ENCODE measurements at regions of chr1 and their contacts with region 1.

Region 1: DNA sequence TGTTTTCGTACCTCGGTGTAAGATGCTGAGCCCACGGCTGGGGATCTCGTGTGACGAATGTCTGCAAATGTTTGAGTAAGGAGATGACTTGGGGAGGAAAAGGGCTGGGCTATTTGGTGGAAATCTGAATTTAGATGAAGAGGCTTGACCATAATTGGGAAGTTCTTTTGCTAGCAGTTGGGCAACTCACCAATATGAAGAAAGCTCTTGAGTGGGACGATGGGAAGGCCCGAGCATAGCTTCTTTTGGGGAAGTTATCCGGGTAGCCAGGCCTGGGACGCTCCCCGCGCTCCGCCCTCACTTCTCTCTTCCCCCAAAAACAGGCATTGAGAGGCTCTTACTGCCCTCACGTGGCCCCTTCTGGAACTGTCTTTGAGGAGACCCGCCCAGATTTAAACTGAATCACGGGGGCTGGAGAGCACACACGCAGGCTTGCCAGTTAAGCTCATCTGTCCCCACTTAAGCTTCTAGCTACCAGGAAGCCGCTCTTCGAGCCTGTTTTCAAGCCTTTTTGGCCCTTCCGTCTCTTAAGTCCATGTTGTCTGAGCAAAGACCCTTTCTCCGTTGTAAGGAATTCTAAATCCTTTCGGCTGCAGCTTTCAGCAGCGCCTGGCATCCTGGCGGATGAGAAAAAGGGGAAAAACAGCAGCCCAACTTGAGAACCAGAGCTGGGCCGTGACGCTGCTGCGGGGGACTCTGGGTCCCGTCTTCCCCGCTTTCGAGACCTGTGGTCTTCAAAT is 93.1 kb downstream of the NID1 start:
- DNase-seq: peak; percentile 93
- ATAC-seq: peak; percentile 98
- H3K4me3 Mint-ChIP-seq: peak overlapping the region; percentile 60
- H3K27ac Mint-ChIP-seq: peak overlapping the region; percentile 82
- H3K4me1 Mint-ChIP-seq: peaks cover 15% of the 10 kb centered on the region
- H3K27me3 Mint-ChIP-seq: peaks cover 2% of the 10 kb centered on the region

Region 2: GRCh38 chr1:235642011-235642942 is 329.5 kb before region 1 on chr1:
- CTCF ChIA-PET with region 1: no interaction called
- POLR2A ChIA-PET with region 1: no interaction called
- intact Hi-C with region 1: loop called in 1 of 2 experiments (anchors 5 kb)
- DNase-seq: peak; percentile 84
- ATAC-seq: peak; percentile 89
- H3K4me3 Mint-ChIP-seq: peak overlapping the region; percentile 47
- H3K27ac Mint-ChIP-seq: peak overlapping the region; percentile 77
- H3K4me1 Mint-ChIP-seq: peaks cover 23% of the 10 kb centered on the region
- H3K27me3 Mint-ChIP-seq: peaks cover 25% of the 10 kb centered on the region

Region 3: GRCh38 chr1:235791532-235792060 is 180.1 kb before region 1 on chr1:
- CTCF ChIA-PET with region 1: interaction called, 8 read pairs
- POLR2A ChIA-PET with region 1: no interaction called
- intact Hi-C with region 1: loop called in 1 of 2 experiments (anchors 10 kb)
- DNase-seq: no peak
- ATAC-seq: no peak
- H3K4me3 Mint-ChIP-seq: no peak overlapping the region
- H3K27ac Mint-ChIP-seq: no peak overlapping the region
- H3K4me1 Mint-ChIP-seq: peaks cover 6% of the 10 kb centered on the region
- H3K27me3 Mint-ChIP-seq: no peaks in the 10 kb centered on the region

Region 4: DNA sequence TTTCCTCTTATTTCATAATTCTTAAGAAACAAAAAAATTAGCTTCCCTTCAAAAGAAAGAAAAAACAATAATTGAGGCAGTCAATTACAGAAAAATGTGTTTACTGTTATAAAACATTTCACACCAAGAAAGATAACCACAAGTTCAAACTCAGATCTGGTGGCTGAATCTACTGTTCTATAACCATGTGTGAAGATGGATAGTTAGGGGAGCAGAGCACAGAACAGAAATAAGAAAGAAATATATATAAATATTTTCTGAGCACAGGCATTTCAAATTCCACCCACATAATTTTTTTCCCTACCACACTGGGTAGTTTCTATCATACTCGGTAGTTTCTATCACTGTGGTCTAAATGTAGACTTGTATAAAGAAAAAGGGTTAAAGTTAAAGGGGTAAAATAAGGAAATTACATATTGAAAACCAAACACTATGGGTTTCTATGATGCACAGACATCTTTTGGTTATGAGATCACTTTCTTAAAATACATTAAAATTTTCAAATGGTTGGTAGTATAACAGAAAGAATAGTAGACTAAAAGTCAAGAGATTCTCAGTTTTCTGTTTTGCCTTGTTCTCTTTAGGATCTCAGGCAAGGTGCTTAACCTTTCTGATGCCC is 115.8 kb before region 1 on chr1:
- CTCF ChIA-PET with region 1: interaction called, 12 read pairs
- POLR2A ChIA-PET with region 1: interaction called, 7 read pairs
- intact Hi-C with region 1: no loop called
- DNase-seq: no peak
- ATAC-seq: peak; percentile 62
- H3K4me3 Mint-ChIP-seq: no peak overlapping the region
- H3K27ac Mint-ChIP-seq: peak overlapping the region; percentile 84
- H3K4me1 Mint-ChIP-seq: peaks cover 54% of the 10 kb centered on the region
- H3K27me3 Mint-ChIP-seq: no peaks in the 10 kb centered on the region

Region 5: DNA sequence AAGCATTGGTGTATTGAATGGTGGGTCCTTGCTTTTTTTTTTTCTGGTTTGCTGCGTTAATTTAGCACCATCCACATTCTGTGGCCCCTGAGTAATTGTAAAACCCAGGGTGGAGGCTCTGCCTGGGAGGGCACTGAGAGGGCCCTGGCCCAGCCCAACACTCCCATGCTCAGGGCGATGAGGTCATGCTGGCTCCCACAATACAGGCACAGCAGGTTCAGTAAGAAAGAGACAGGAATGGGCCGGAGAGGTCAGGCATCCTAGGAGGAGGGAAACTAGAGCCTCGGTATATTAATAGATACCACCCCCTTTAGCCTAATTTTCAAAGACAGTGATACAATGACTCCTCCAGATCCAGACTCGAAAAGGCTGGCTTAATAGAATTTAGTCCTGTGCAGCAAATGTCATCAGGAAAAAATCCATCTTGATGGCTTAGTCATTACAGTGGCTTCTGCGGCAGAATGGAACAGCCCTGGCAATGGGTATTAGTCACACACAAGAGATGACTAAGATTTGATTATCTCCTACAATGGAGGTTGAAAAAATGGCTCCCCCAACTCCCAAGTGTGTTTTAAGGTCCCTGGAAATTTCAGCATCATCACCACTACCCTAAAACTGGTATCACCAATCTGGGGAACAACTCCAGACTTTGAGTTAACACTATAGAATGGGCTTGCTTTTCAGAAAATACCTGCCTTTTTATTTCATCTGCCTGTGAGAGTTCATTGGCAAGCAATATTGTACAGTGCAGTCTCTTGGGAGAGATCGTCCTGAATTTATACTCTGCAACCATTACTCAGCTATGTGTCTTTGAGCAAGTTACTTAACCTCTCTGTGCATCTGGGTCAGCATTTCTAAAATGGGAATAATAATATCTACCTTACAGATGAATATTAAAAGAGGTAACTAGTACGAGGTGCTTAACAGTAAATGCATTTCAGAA is 61.1 kb before region 1 on chr1:
- CTCF ChIA-PET with region 1: interaction called, 4 read pairs
- POLR2A ChIA-PET with region 1: no interaction called
- intact Hi-C with region 1: loop called in 1 of 2 experiments (anchors 2 kb)
- DNase-seq: peak; percentile 74
- ATAC-seq: peak; percentile 92
- H3K4me3 Mint-ChIP-seq: no peak overlapping the region
- H3K27ac Mint-ChIP-seq: peak overlapping the region; percentile 53
- H3K4me1 Mint-ChIP-seq: peaks cover 32% of the 10 kb centered on the region
- H3K27me3 Mint-ChIP-seq: peaks cover 3% of the 10 kb centered on the region

Region 6: DNA sequence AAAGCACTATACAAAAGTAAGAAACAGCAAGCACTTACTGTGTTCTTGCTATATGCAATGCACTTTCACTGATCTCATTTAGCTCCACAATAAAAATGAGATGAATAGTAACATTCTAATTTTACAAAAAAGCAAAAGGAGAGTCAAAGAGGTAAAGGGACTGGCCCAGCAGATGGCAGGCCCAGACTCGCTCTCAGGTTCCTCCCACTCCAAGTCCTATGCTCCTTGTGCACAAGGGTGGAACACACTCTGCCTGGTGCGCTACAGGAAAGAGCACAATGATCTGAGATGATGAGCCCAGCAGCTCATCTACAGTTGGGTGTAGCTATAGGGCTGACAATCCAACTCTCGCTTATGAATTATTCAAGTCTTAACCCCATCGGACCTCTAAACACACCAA is 10.9 kb before region 1 on chr1:
- CTCF ChIA-PET with region 1: interaction called, 24 read pairs
- POLR2A ChIA-PET with region 1: no interaction called
- intact Hi-C with region 1: loop called in 1 of 2 experiments (anchors 2 kb)
- DNase-seq: no peak
- ATAC-seq: no peak
- H3K4me3 Mint-ChIP-seq: no peak overlapping the region
- H3K27ac Mint-ChIP-seq: no peak overlapping the region
- H3K4me1 Mint-ChIP-seq: peaks cover 9% of the 10 kb centered on the region
- H3K27me3 Mint-ChIP-seq: no peaks in the 10 kb centered on the region

Region 7: GRCh38 chr1:236083650-236084385 is 112.1 kb after region 1 on chr1:
- CTCF ChIA-PET with region 1: no interaction called
- POLR2A ChIA-PET with region 1: no interaction called
- intact Hi-C with region 1: no loop called
- DNase-seq: peak; percentile 34
- ATAC-seq: peak; percentile 84
- H3K4me3 Mint-ChIP-seq: no peak overlapping the region
- H3K27ac Mint-ChIP-seq: no peak overlapping the region
- H3K4me1 Mint-ChIP-seq: peaks cover 8% of the 10 kb centered on the region
- H3K27me3 Mint-ChIP-seq: peaks cover 6% of the 10 kb centered on the region

Region 8: GRCh38 chr1:236120721-236121153 is 149.0 kb after region 1 on chr1:
- CTCF ChIA-PET with region 1: no interaction called
- POLR2A ChIA-PET with region 1: no interaction called
- intact Hi-C with region 1: no loop called
- DNase-seq: peak; percentile 16
- ATAC-seq: peak; percentile 77
- H3K4me3 Mint-ChIP-seq: no peak overlapping the region
- H3K27ac Mint-ChIP-seq: peak overlapping the region; percentile 8
- H3K4me1 Mint-ChIP-seq: peaks cover 26% of the 10 kb centered on the region
- H3K27me3 Mint-ChIP-seq: peaks cover 13% of the 10 kb centered on the region

Region 9: GRCh38 chr1:236282425-236282716 is 310.6 kb after region 1 on chr1:
- CTCF ChIA-PET with region 1: no interaction called
- POLR2A ChIA-PET with region 1: no interaction called
- intact Hi-C with region 1: no loop called
- DNase-seq: peak; percentile 71
- ATAC-seq: peak; percentile 12
- H3K4me3 Mint-ChIP-seq: peak overlapping the region; percentile 82
- H3K27ac Mint-ChIP-seq: peak overlapping the region; percentile 70
- H3K4me1 Mint-ChIP-seq: peaks cover 47% of the 10 kb centered on the region
- H3K27me3 Mint-ChIP-seq: peaks cover 1% of the 10 kb centered on the region